Common myeloid progenitor, CD34-positive (primary cell): ENCODE measurements at regions of chr1 and their contacts with region 1.

Region 1: GRCh38 chr1:41776891-41777441 is 141.8 kb downstream of the HIVEP3 start:
- DNase-seq: no peak
- H3K4me3 ChIP-seq: no peak overlapping the region
- H3K27ac ChIP-seq: no peak overlapping the region
- H3K4me1 ChIP-seq: peaks cover 0 to 24% (median 8%) of the 10 kb centered on the region in 4 experiments
- H3K27me3 ChIP-seq: no peaks in the 10 kb centered on the region

Region 2: DNA sequence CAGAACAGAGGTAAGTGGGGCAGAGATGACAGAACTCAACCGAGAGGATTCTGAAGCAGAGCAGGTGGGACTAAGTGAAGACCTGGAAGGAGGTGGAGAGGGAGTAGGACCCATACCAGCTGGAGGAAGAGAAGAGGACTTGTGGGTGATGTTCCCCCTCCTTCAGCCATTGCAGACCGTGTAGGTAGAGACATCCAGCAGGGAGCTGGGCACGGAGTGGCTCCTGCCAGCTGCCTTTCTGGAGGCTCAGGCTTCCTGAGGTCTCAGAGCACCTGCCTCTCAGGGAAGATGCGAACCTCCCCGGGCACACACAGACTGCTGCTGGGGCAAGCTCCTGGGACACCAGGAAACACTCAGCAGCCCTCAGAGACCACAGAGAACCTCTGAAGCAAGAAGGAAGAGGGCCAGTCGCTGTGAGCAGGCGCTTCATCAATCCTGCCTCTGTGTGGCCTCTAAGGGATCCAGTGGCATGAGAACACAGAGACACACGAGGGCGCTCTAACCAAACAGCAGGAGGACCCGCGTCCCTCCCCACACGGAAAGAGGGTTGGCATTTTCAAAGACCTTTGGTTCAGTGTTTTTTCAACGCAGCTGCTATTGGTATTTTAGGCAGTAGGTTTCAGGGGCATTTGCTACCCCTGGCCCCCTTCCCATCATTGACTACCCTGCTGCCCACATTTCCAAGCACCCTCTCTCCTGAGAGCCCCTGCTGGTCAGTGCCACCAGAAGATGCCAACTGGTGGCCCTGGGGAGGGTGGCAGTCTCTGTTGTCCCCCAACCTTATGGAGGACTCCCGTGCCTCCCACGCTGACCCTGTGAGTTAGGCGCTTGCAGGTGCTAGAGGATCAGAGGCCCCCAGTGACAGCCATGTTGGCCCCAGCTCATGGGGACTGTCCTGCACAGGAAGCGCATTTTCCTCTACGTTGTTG is 202.9 kb before region 1 on chr1:
- CTCF ChIA-PET with region 1: interaction called, 11 read pairs
- POLR2A ChIA-PET with region 1: no interaction called
- DNase-seq: peak; percentile 85 to 95 (median 92)
- H3K4me3 ChIP-seq: no peak overlapping the region
- H3K27ac ChIP-seq: no peak overlapping the region
- H3K4me1 ChIP-seq: peaks cover 0 to 25% (median 7%) of the 10 kb centered on the region in 4 experiments
- H3K27me3 ChIP-seq: no peaks in the 10 kb centered on the region

Region 3: GRCh38 chr1:41789419-41790260 is 12.7 kb after region 1 on chr1:
- CTCF ChIA-PET with region 1: interaction called, 10 read pairs
- POLR2A ChIA-PET with region 1: no interaction called
- DNase-seq: no peak
- H3K4me3 ChIP-seq: no peak overlapping the region
- H3K27ac ChIP-seq: no peak overlapping the region
- H3K4me1 ChIP-seq: peaks cover 0 to 34% (median 23%) of the 10 kb centered on the region in 4 experiments
- H3K27me3 ChIP-seq: no peaks in the 10 kb centered on the region